ENCODE measurements at regions of chr2 and their contacts with region 1.

Region 1: GRCh38 chr2:9813312-9814133 is 29.8 kb upstream of the TAF1B start:
- DNase-seq: no peak
- H3K4me3 ChIP-seq: no peak overlapping the region
- CTCF ChIP-seq: peak; percentile 97

Region 2: GRCh38 chr2:9824956-9825720 is 11.6 kb after region 1 on chr2:
- CTCF ChIA-PET with region 1: interaction called, 77 read pairs
- POLR2A ChIA-PET with region 1: no interaction called
- DNase-seq: no peak
- H3K4me3 ChIP-seq: no peak overlapping the region
- CTCF ChIP-seq: no peak

Region 3: DNA sequence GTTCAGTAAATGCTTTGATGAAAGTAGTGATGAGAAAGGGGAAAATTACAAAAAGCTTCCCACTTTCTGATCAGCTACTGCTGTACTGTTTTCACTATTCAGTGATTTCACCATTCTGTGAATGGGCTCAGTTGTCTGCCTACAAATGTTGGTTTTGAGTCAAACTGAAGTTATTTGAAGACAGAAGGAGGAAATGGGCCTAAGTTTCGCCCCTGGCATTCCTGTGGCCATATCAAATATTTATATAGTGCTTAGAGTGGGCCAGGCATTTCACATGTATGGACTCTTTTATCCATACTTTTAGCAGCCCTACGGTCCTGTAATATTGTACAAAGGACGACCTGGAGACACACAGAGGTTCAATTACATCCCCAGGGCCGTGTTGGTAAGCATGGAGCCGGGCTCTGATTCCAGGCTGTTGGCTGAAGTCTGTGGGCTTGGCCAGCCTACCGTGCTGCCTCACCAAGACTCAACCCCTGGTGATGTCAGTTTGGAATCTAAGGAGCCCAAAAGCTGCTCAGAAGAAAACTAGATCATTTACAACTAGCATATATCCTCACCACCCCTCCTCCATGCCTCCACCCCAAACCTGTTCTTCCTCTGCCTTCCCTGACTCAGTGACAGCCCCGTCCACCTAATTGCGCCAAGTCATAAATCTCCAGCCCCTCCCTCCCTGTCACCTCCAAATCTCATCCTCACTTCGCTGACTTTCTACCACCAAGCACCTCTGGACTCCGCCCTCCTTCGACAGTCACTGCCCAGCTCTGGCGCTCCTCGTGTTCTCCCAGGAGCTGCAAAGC is 127.9 kb after region 1 on chr2:
- CTCF ChIA-PET with region 1: interaction called, 23 read pairs
- POLR2A ChIA-PET with region 1: no interaction called
- DNase-seq: peak; percentile 45
- H3K4me3 ChIP-seq: no peak overlapping the region
- CTCF ChIP-seq: no peak

Region 4: DNA sequence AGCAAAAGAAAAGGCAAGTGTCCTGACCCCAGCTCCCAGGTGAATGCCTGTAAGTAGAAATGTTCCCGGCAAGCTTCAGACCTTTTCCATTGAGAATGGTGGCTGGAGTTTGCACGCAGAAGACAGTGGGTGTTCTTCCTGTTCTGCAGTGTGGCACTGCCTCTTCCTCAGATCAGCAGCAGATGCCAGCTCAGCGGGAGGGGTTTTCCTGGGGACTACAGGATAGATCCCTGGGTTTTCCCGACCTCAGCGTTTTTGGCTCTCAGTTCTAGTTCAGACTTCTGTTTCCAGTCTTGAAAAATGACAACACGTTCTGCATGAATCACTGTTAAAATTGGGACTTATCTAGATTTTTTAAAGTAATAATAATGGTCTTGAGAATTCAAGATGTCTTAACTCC is 177.2 kb after region 1 on chr2:
- CTCF ChIA-PET with region 1: interaction called, 61 read pairs
- POLR2A ChIA-PET with region 1: no interaction called
- DNase-seq: no peak
- H3K4me3 ChIP-seq: no peak overlapping the region
- CTCF ChIP-seq: no peak

Region 5: DNA sequence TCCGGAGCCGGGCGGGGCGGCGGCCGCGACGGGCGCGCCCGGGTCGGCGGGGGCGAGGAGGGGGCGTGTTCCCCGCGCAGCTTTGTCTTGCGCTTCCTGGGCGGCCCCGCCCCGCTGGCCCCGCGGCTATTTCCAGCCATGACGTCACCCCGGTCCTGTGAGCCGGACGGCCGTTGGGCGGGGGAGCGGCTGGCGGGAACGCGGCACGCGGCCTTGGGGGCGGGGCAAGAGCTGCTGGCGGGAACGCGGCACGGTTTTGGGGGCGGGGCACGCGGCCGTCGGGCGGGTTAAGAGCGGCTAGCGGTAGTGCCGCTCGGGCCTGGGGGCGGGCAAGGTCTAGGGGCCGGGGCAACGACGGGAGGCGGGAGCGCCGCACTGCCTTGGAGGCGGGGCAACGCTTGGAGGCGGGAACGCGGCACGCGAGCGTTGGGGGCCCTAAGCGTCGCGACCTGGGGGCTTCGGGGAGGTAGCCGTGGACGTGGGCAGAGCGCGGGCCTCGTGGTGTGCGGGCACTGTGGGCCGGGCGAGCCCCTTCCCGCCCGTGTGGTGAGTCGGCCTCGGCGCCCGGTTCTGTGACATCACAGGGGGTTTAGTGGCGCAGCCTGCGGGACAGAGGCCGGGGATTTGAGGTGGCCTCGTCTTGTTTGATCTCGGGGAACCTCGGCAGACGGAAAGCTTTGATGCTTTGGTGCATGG is 230.5 kb after region 1 on chr2:
- CTCF ChIA-PET with region 1: interaction called, 293 read pairs
- POLR2A ChIA-PET with region 1: no interaction called
- DNase-seq: no peak
- H3K4me3 ChIP-seq: peak overlapping the region; percentile 64
- CTCF ChIP-seq: no peak

Region 6: GRCh38 chr2:10097352-10098148 is 284.0 kb after region 1 on chr2:
- CTCF ChIA-PET with region 1: interaction called, 12 read pairs
- POLR2A ChIA-PET with region 1: no interaction called
- DNase-seq: no peak
- H3K4me3 ChIP-seq: no peak overlapping the region
- CTCF ChIP-seq: peak; percentile 97

Measured in AG04449 (cell line).